ENCODE measurements at regions of chr15 and their contacts with region 1.

Region 1: GRCh38 chr15:77034695-77035489 is 36.0 kb downstream of the TSPAN3 start:
- DNase-seq: peak; percentile 29 to 60
- ATAC-seq: peak; percentile 27

Region 2: DNA sequence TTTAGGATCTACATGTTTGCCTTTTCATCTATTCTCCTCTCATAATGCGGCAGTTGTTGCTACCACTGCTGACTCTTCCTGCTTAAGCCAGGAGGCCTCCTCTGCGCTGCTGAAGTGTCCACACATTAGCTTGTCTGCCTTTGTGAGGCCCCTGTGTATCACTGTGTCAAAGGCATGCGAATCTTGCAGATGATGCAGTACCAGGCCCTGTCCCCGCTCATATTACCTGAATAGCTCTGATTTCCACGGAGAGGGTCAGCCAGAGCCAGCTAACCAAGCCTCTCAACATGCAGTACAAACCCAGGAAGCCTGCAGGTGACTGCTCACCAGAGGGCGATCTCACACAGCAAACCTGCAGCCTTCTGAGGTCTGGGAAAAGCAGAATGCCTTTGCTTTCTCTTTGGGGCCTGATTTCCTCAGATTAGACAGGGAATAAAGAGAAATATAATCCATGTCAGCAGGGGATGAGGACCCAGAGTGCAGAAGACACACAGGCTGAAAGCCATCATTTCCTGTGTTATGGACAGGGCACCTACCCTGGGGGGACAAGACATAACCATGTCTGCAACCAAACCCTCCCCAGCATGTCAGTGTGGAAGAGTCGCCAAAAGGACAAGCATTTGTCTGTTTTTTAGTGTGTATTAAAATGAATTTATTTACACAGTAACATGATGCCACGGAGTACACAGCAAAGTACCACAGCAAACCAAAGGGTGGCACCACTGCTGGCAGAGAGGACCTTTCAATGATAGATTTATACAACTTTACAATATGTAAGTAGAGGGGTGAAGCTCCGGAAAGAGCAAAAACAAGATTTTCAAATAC is 72.9 kb after region 1 on chr15:
- intact Hi-C with region 1: loop called in 1 of 2 experiments (anchors 10 kb)
- DNase-seq: peak; percentile 39 to 68
- ATAC-seq: peak; percentile 86